ENCODE measurements at regions of chr2 and their contacts with region 1.

Region 1: GRCh38 chr2:237691908-237692600 is 64.7 kb downstream of the LRRFIP1 start:
- DNase-seq: peak; percentile 96
- H3K4me3 Mint-ChIP-seq: peak overlapping the region; percentile 98
- H3K27ac Mint-ChIP-seq: peak overlapping the region; percentile 99
- H3K4me1 Mint-ChIP-seq: peaks cover 62% of the 10 kb centered on the region
- H3K27me3 Mint-ChIP-seq: no peaks in the 10 kb centered on the region

Region 2: DNA sequence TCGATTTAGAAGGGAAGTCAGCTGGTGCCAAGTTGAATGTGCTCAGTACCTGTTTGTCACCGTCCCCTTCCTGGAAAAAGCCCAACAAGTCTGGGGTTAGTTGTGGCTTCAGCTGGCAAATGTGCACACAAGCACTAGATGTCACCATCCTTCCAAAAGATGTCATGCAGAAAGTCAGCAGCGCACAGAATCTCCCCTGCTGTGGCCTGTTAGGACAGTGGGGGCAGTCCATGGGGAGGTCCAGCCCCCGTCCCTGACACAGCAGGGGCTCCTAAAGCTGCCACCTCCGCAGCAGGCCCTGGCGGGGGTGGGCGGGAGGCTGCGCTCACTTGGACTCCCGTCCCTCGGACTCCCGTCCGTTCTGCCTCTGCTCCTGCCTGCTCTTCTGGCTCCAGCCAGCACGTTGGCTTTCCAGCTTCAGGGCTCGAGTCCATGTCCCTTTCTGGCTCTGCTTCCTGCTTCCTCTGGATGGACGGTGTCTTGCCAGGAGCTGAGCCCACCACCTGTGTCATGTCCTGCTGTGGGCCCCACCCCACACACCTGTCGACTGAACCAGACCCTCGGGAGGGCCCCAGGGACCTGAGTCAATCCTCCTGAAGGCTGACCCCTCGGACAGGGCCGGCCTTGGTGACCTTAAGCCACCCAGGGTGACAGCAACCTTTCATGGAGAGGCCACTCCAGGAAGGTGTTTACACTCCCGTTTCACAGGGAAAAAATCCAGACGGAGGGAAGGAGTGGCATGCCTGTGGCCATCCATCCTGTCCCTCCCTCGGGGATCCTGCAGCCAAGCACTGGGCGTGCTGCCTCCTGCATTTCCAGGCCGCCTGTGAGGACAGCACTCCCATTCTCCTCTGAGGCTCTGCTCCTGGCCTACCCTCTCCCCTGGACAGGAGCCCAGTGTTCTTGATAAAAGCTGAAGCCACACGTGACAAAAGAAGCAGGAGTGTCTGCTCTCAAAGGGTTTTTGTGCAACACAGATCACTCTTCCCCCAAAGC is 110.0 kb before region 1 on chr2:
- CTCF ChIA-PET with region 1: interaction called, 5 read pairs
- POLR2A ChIA-PET with region 1: no interaction called
- intact Hi-C with region 1: loop called (anchors 2 kb)
- DNase-seq: peak; percentile 80
- H3K4me3 Mint-ChIP-seq: no peak overlapping the region
- H3K27ac Mint-ChIP-seq: no peak overlapping the region
- H3K4me1 Mint-ChIP-seq: peaks cover 5% of the 10 kb centered on the region
- H3K27me3 Mint-ChIP-seq: no peaks in the 10 kb centered on the region

Region 3: DNA sequence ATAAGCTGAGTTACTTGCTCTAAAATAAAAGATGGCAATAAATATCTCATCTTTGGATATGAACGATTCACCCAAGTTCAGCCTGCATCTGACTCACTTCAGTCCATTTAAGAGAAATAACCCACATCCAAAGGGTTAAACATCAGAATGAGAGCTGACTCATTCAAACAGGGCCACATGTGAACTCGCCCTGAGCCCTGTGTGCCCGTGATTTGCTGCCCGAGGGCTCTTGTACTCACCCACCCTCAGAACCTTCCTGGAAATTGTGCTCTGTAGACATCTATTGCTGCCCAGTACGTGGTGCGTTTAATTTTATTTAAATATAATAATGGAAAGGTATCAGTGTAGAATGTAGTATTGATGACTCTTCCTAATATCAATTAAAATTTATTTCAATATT is 39.6 kb after region 1 on chr2:
- CTCF ChIA-PET with region 1: interaction called, 15 read pairs
- POLR2A ChIA-PET with region 1: interaction called, 32 read pairs
- intact Hi-C with region 1: loop called (anchors 1 kb)
- DNase-seq: peak; percentile 81
- H3K4me3 Mint-ChIP-seq: peak overlapping the region; percentile 11
- H3K27ac Mint-ChIP-seq: peak overlapping the region; percentile 81
- H3K4me1 Mint-ChIP-seq: peaks cover 77% of the 10 kb centered on the region
- H3K27me3 Mint-ChIP-seq: no peaks in the 10 kb centered on the region

Region 4: GRCh38 chr2:237818066-237818473 is 126.0 kb after region 1 on chr2:
- CTCF ChIA-PET with region 1: no interaction called
- POLR2A ChIA-PET with region 1: no interaction called
- intact Hi-C with region 1: no loop called
- DNase-seq: no peak
- H3K4me3 Mint-ChIP-seq: no peak overlapping the region
- H3K27ac Mint-ChIP-seq: no peak overlapping the region
- H3K4me1 Mint-ChIP-seq: peaks cover 33% of the 10 kb centered on the region
- H3K27me3 Mint-ChIP-seq: no peaks in the 10 kb centered on the region

Region 5: GRCh38 chr2:237998530-237998929 is 306.5 kb after region 1 on chr2:
- CTCF ChIA-PET with region 1: no interaction called
- POLR2A ChIA-PET with region 1: no interaction called
- intact Hi-C with region 1: loop called (anchors 5 kb)
- DNase-seq: peak; percentile 65
- H3K4me3 Mint-ChIP-seq: peak overlapping the region; percentile 62
- H3K27ac Mint-ChIP-seq: peak overlapping the region; percentile 93
- H3K4me1 Mint-ChIP-seq: peaks cover 57% of the 10 kb centered on the region
- H3K27me3 Mint-ChIP-seq: no peaks in the 10 kb centered on the region

Measured in activated CD4-positive, alpha-beta memory T cell treated with anti-CD3 and anti-CD28 coated beads for 36 hours (primary cell).